ENCODE measurements at regions of chr18 and their contacts with region 1.

Region 1: GRCh38 chr18:3665780-3666525 is 216.0 kb downstream of the TGIF1 start:
- DNase-seq: peak; percentile 30
- ATAC-seq: peak; percentile 81
- H3K4me3 ChIP-seq: no peak overlapping the region
- H3K27ac ChIP-seq: no peak overlapping the region
- H3K4me1 ChIP-seq: peaks cover 4% of the 10 kb centered on the region
- H3K27me3 ChIP-seq: no peaks in the 10 kb centered on the region
- CTCF ChIP-seq: peak; percentile 86 to 93 (median 92)
- EP300 ChIP-seq: no peak
- POLR2A ChIP-seq: no peak
- RAD21 ChIP-seq: peak; percentile 99

Region 2: GRCh38 chr18:3177902-3178687 is 487.9 kb before region 1 on chr18:
- CTCF ChIA-PET with region 1: no interaction called
- POLR2A ChIA-PET with region 1: no interaction called
- RAD21 ChIA-PET with region 1: no interaction called
- SMC1A ChIA-PET with region 1: interaction called, 3 read pairs
- in situ Hi-C with region 1: no loop called
- intact Hi-C with region 1: loop called (anchors 5 kb)
- DNase-seq: peak; percentile 98
- ATAC-seq: peak; percentile 91
- H3K4me3 ChIP-seq: 0 out of 2 replicates have a peak overlapping the region, but pooled peaks have one; percentile 6
- H3K27ac ChIP-seq: peak overlapping the region; percentile 97
- H3K4me1 ChIP-seq: peaks cover 50% of the 10 kb centered on the region
- H3K27me3 ChIP-seq: no peaks in the 10 kb centered on the region
- CTCF ChIP-seq: no peak
- EP300 ChIP-seq: peak; percentile 100
- POLR2A ChIP-seq: peak; percentile 78
- RAD21 ChIP-seq: no peak

Region 3: DNA sequence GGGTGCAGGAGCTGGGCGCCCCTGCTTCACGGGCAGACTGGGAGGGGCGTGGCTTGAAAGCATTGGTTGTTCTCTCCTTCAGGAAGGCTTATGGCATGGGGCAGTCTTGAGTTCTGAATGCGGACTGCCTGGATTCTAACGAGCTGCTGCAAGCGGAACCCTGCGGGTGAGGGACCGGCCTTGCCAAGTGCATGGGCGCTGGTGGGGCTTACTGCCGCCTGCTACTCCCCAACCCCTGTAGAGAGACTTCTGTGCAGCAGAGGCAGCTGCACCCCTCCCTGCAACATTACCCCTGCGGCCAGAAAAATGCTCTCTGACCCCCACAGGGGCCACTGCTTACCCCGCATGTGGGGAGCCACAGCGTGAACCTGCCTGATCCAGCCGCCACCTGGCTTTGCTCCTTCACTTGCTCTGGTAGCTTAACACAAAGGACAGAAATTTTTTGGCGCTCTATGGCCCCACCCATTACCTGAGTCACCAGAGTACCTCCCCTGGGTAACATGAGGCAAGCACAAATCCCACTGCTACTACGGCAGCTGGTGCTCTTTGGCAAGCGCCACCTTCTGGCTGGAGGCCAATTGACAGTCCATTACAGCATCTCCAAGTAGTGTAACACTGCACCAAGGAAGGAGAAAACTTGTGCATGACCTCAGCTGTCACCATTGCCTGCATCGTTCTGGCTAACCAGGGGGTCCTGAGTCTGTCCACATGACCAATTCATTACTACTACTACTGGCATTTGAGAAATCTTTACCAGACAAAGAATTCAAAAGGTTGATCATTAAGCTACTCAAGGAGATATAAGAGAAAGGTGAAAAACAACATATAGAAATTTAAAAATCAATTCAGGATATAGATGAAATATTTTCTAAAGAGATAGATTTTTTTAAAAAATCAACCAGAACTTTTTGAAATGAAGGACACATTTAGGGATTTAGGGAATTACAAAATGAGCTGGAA is 368.6 kb before region 1 on chr18:
- CTCF ChIA-PET with region 1: interaction called, 11 read pairs
- POLR2A ChIA-PET with region 1: no interaction called
- RAD21 ChIA-PET with region 1: interaction called, 6 read pairs
- SMC1A ChIA-PET with region 1: interaction called, 31 read pairs
- in situ Hi-C with region 1: no loop called
- intact Hi-C with region 1: no loop called
- DNase-seq: peak; percentile 69
- ATAC-seq: peak; percentile 99
- H3K4me3 ChIP-seq: peak overlapping the region; percentile 71
- H3K27ac ChIP-seq: peak overlapping the region; percentile 33
- H3K4me1 ChIP-seq: peaks cover 5% of the 10 kb centered on the region; the same call in 1 of the 2 replicates
- H3K27me3 ChIP-seq: no peaks in the 10 kb centered on the region; a peak in 1 of 4 replicates
- CTCF ChIP-seq: peak; percentile 74 to 92 (median 77)
- EP300 ChIP-seq: no peak
- POLR2A ChIP-seq: peak; percentile 90
- RAD21 ChIP-seq: peak; percentile 41

Region 4: GRCh38 chr18:3525870-3526420 is 140.0 kb before region 1 on chr18:
- CTCF ChIA-PET with region 1: interaction called, 17 read pairs
- POLR2A ChIA-PET with region 1: interaction called, 3 read pairs
- RAD21 ChIA-PET with region 1: interaction called, 12 read pairs
- SMC1A ChIA-PET with region 1: interaction called, 7 read pairs
- in situ Hi-C with region 1: no loop called
- intact Hi-C with region 1: no loop called
- DNase-seq: peak; percentile 65
- ATAC-seq: peak; percentile 83
- H3K4me3 ChIP-seq: peak overlapping the region; percentile 16
- H3K27ac ChIP-seq: no peak overlapping the region
- H3K4me1 ChIP-seq: peaks cover 12% of the 10 kb centered on the region
- H3K27me3 ChIP-seq: no peaks in the 10 kb centered on the region
- CTCF ChIP-seq: no peak
- EP300 ChIP-seq: peak; percentile 73 to 82; a peak in 2 of 4 replicates
- POLR2A ChIP-seq: no peak
- RAD21 ChIP-seq: 0 out of 2 replicates have a peak, but pooled peaks have one; percentile 3

Region 5: GRCh38 chr18:3593904-3594661 is 71.9 kb before region 1 on chr18:
- CTCF ChIA-PET with region 1: interaction called, 96 read pairs
- POLR2A ChIA-PET with region 1: interaction called, 4 read pairs
- RAD21 ChIA-PET with region 1: interaction called, 56 read pairs
- SMC1A ChIA-PET with region 1: interaction called, 59 read pairs
- in situ Hi-C with region 1: no loop called
- intact Hi-C with region 1: loop called (anchors 1 kb)
- DNase-seq: peak; percentile 81
- ATAC-seq: peak; percentile 72
- H3K4me3 ChIP-seq: peak overlapping the region; percentile 43; the same call in 1 of the 2 replicates
- H3K27ac ChIP-seq: peak overlapping the region; percentile 90
- H3K4me1 ChIP-seq: peaks cover 37% of the 10 kb centered on the region
- H3K27me3 ChIP-seq: no peaks in the 10 kb centered on the region
- CTCF ChIP-seq: peak; percentile 82 to 95 (median 83)
- EP300 ChIP-seq: peak in 1 of 2 experiments; percentile 53; a peak in 2 of 4 replicates
- POLR2A ChIP-seq: peak; percentile 81
- RAD21 ChIP-seq: peak; percentile 79

Region 6: DNA sequence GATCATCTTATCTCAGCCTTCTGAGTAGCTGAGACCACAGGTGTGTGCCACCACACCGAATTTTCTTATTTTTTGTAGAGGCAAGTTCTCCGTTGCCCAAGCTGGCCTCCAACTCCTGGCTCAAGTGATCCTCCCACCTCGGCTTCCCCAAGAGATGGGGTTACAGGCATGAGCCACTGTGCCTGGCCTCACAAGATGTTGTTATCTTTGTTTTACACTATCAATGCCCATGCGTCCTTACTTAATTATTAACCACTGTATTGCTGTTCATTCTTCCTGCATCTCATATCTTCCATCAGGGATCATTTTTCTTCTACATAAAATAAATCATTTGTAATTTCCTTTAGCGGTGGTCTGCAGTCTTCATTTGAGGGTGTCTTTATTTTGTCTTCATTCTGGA is 34.1 kb before region 1 on chr18:
- CTCF ChIA-PET with region 1: interaction called, 14 read pairs
- POLR2A ChIA-PET with region 1: interaction called, 5 read pairs
- RAD21 ChIA-PET with region 1: interaction called, 7 read pairs
- SMC1A ChIA-PET with region 1: interaction called, 7 read pairs
- in situ Hi-C with region 1: no loop called
- intact Hi-C with region 1: no loop called
- DNase-seq: no peak
- ATAC-seq: no peak
- H3K4me3 ChIP-seq: no peak overlapping the region
- H3K27ac ChIP-seq: no peak overlapping the region
- H3K4me1 ChIP-seq: no peaks in the 10 kb centered on the region
- H3K27me3 ChIP-seq: no peaks in the 10 kb centered on the region
- CTCF ChIP-seq: no peak
- EP300 ChIP-seq: no peak
- POLR2A ChIP-seq: no peak
- RAD21 ChIP-seq: no peak

Region 7: DNA sequence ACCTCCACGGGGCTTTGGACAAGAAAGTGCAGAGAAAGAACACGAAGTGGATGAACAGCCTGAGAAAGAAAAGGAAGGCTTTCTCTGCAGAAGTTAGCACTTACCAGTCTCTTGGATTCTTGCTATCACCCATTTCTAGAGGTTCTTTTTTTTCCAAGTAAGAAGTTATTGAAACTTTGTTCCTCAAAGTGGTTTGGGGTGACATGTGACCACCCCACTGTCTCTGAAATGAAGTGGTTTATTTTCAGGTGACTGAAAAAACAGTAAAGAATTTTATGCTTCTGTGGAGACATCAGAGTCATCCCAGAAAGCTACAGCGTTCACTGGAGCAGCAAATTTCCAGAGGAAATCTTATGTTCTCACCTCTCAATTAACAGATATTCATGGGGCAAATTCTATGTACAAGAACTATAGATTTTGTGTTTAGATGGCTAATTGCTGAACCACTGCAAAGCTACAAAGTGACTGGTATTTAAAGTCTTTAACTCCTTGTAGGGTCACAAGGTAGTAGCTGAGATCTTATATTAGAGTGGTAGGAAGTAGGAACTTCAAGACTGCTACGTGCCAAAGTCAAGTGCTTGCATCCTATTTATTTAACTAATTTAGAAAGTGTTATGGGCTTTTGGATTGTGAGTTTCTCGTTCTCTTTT is 51.5 kb after region 1 on chr18:
- CTCF ChIA-PET with region 1: no interaction called
- POLR2A ChIA-PET with region 1: no interaction called
- RAD21 ChIA-PET with region 1: no interaction called
- SMC1A ChIA-PET with region 1: no interaction called
- in situ Hi-C with region 1: no loop called
- intact Hi-C with region 1: no loop called
- DNase-seq: no peak
- ATAC-seq: no peak
- H3K4me3 ChIP-seq: no peak overlapping the region
- H3K27ac ChIP-seq: no peak overlapping the region
- H3K4me1 ChIP-seq: no peaks in the 10 kb centered on the region
- H3K27me3 ChIP-seq: no peaks in the 10 kb centered on the region
- CTCF ChIP-seq: no peak
- EP300 ChIP-seq: no peak
- POLR2A ChIP-seq: no peak
- RAD21 ChIP-seq: no peak

Measured in GM12878 (cell line).